Right lobe of liver (tissue), 6 donors: ENCODE measurements at regions of chr15 and their contacts with region 1.

Region 1: GRCh38 chr15:46365572-46365971 is 730.7 kb downstream of the SQOR start:
- DNase-seq: no peak
- ATAC-seq: no peak
- H3K4me3 ChIP-seq: no peak overlapping the region
- H3K27ac ChIP-seq: no peak overlapping the region
- H3K4me1 ChIP-seq: no peaks in the 10 kb centered on the region
- H3K27me3 ChIP-seq: no peaks in the 10 kb centered on the region
- CTCF ChIP-seq: no peak
- POLR2A ChIP-seq: no peak

Region 2: GRCh38 chr15:46442184-46442583 is 76.6 kb after region 1 on chr15:
- intact Hi-C with region 1: loop called in 1 of 2 experiments (anchors 10 kb)
- DNase-seq: no peak
- ATAC-seq: no peak
- H3K4me3 ChIP-seq: no peak overlapping the region
- H3K27ac ChIP-seq: no peak overlapping the region
- H3K4me1 ChIP-seq: no peaks in the 10 kb centered on the region
- H3K27me3 ChIP-seq: no peaks in the 10 kb centered on the region
- CTCF ChIP-seq: no peak
- POLR2A ChIP-seq: no peak